MCF 10A (cell line): ENCODE measurements at regions of chr21 and their contacts with region 1.

Region 1: DNA sequence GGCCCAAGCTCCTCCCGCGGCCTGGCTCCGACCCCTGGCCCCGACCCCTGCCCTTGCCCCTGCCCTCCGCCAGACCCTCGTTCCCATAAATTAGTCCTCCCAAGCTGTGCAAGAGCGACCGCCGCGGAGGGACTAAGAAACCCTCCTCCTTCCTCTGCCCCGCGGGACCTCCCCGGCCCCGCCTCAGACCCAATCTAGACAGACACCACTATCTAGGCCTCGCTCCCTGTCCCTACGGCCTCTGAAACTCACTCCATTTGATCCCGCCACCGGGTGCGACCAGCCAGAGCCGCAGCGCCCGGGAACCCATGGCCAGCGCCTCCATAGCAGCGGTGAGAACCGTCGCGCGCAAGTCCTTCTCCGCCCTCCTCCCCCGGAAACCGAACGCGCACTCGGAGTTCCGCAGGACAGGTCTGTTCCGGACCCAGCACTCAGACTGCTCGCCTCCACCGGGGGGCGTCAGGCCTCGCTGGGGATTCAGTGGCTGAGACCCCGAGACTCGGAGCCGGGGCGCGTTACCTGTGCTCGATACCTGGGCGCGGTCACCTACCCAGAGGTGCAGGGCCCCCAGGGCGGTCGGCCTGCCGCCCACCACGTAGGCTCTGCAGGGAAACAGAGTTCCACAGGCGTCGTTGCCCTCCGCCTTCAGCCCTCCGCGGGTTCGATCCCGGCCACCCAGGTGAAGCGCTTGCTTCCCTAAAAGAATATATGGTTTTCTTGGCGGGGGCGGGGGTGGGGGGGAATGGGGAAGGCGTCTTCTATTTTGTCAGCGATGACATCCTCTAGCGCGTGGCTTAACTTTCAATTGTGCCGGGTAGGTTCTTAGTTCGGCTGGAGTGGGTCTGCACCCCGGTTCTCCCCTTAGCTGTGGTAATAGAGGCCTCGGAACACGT is at the start of gene MRPL39:
- DNase-seq: peak; percentile 88
- H3K4me3 Mint-ChIP-seq: peak within 1 kb of the TSS; percentile 87
- H3K27ac Mint-ChIP-seq: peak within 1 kb of the TSS; percentile 97
- H3K4me1 Mint-ChIP-seq: peaks cover 16% of the 10 kb centered on the region
- H3K27me3 Mint-ChIP-seq: no peaks in the 10 kb centered on the region
- CTCF ChIP-seq: peak; percentile 68
- total RNA-seq, gene MRPL39: 29.2 and 37.1 TPM in 2 replicates

Region 2: DNA sequence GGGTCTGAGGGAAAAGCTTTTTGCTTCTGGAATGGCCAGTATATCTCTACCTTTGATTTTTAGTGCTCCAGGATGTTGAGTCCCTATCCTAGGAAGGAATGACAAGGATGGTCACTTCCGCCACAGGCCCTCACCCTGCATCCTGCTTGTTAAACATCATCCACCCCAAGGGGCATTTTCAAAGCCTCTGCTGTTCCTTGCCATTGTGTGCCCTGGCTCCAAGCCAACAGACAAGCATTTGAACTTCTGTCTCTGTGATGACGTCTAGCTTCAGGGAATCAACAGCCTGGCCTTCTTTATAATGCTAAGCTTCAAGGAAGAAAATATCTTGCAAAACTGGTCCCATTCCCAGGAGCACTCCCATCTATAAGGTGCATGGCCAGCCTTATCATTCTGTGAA is 19.4 kb after region 1 on chr21:
- CTCF ChIA-PET with region 1: interaction called, 19 read pairs
- POLR2A ChIA-PET with region 1: no interaction called
- intact Hi-C with region 1: no loop called
- DNase-seq: peak; percentile 45
- H3K4me3 Mint-ChIP-seq: no peak overlapping the region
- H3K27ac Mint-ChIP-seq: no peak overlapping the region
- H3K4me1 Mint-ChIP-seq: no peaks in the 10 kb centered on the region
- H3K27me3 Mint-ChIP-seq: no peaks in the 10 kb centered on the region
- CTCF ChIP-seq: no peak

Region 3: DNA sequence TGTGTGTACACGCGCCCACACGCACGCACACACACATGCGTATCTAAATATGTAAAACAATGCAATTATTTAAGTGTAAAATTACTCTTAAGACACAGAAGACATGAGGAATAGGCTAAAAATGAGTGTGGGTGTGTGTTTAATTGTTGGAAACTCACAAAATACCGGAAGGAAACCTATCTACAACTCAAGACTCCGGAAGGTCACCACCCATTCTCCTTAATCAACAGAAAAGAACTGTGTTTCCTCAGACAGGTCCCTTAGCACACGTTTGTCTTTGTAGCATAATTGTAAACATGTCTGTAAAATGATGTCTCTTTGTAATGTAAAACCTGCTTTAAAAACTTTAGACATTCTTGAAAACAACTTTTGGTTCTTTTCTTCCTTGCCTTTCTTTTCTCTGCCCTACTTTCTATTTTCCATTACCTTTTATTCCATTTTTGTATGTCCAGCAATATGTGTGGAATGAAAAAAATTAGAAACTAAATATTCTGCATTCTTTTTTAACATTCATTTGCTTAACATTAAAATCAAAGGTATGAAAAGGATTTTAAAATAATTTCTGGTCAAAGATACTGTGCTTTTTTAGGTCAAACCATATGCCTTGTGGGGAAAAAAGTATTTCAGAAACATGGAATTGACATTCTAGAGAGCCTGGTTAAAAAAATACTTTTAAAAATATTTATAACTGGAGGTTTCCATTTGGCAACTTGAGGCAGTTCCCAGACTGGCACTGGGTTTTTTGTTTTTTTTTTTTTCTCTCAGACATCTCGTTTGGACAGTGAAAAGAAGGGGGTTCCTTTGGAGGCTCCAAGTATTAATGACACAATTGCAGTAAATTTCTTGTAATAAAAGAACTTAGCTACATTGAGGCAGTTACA is 81.1 kb after region 1 on chr21:
- CTCF ChIA-PET with region 1: interaction called, 11 read pairs
- POLR2A ChIA-PET with region 1: no interaction called
- intact Hi-C with region 1: no loop called
- DNase-seq: no peak
- H3K4me3 Mint-ChIP-seq: no peak overlapping the region
- H3K27ac Mint-ChIP-seq: no peak overlapping the region
- H3K4me1 Mint-ChIP-seq: no peaks in the 10 kb centered on the region
- H3K27me3 Mint-ChIP-seq: no peaks in the 10 kb centered on the region
- CTCF ChIP-seq: no peak

Region 4: GRCh38 chr21:25717491-25718147 is 110.2 kb after region 1 on chr21:
- CTCF ChIA-PET with region 1: interaction called, 63 read pairs
- POLR2A ChIA-PET with region 1: interaction called, 6 read pairs
- intact Hi-C with region 1: no loop called
- DNase-seq: peak; percentile 30
- H3K4me3 Mint-ChIP-seq: no peak overlapping the region
- H3K27ac Mint-ChIP-seq: no peak overlapping the region
- H3K4me1 Mint-ChIP-seq: peaks cover 4% of the 10 kb centered on the region
- H3K27me3 Mint-ChIP-seq: no peaks in the 10 kb centered on the region
- CTCF ChIP-seq: no peak

Region 5: DNA sequence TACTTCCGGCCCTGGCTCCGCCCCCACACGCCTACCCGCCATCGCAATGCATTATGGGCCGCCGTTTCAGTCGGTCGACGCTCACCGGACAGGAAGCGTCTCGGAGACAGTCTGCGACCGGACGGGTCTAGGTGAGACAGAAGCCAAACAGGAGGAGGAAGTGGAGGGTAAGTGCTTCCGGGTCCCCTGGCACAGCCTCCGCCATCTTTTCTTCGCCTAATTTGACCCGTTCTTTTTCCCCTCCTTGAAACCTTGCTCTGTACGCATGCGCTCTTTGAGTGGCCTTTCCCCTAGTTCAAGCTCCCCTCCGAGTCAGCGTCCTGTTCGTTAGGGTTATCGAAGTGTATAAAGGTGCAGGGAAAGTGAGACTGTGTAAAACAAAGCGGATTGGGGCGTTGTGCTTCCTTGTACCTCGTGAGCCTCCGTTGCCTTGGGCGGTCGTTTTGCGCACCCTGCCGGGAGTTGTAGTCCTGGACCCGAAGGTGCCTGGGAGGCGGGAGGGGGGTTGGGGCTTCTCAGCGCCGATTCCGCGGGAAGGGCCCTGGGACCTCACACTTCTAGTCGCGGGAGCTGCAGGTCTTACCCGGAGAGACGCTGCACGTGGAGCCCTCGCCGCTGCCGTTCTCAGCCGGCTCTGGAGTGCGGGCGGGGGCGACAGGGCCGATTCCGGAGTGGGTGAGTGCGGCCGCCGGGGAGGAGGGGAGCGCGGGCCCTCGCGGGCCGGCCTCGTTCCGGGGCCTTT is 127.7 kb after region 1 on chr21 and contains the starts of genes ATP5PF and GABPA:
- CTCF ChIA-PET with region 1: interaction called, 20 read pairs
- POLR2A ChIA-PET with region 1: interaction called, 42 read pairs
- intact Hi-C with region 1: loop called (anchors 1 kb)
- DNase-seq: peak; percentile 99
- H3K4me3 Mint-ChIP-seq: peak within 1 kb of the TSS; percentile 95
- H3K27ac Mint-ChIP-seq: peak within 1 kb of the TSS; percentile 100
- H3K4me1 Mint-ChIP-seq: no peaks in the 10 kb centered on the region
- H3K27me3 Mint-ChIP-seq: no peaks in the 10 kb centered on the region
- CTCF ChIP-seq: no peak
- total RNA-seq, gene ATP5PF: 136 and 143 TPM in 2 replicates
- total RNA-seq, gene GABPA: 16.2 and 16.3 TPM in 2 replicates

Region 6: DNA sequence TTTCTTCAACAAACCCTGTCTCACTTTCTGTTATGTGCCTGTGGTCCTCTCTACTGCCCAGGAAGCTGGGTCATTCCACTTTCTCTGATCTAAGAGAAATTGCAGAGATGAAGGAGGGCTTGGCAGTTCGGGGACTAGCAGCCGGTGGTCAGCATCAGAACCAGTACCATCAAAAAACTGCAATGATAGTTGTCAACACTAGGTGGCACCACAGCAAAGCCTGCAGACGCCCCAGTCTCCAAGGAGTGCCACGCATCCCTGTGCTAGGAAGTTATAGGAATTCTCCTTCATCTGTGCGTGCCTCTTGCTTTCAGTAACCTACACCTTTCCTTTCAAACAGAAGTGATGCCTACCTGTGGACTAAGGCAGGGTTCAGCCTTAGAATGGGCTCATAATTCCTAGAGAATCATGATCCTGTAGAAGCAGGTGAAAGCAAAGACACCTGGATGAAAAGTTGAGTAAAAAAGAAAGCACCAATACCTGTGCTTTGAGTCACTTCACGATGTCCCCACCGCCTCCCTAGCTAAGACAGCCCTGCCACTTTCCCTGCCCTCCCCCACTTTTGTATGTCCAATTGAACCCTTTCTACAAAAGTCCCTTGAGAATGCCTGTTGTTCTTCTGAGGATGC is 1108.6 kb after region 1 on chr21:
- CTCF ChIA-PET with region 1: interaction called, 3 read pairs
- POLR2A ChIA-PET with region 1: no interaction called
- intact Hi-C with region 1: loop called (anchors 1 kb)
- DNase-seq: peak; percentile 69
- H3K4me3 Mint-ChIP-seq: no peak overlapping the region
- H3K27ac Mint-ChIP-seq: no peak overlapping the region
- H3K4me1 Mint-ChIP-seq: no peaks in the 10 kb centered on the region
- H3K27me3 Mint-ChIP-seq: no peaks in the 10 kb centered on the region
- CTCF ChIP-seq: peak; percentile 70